CD8-positive, alpha-beta T cell (primary cell): ENCODE measurements at regions of chr1 and their contacts with region 1.

Region 1: DNA sequence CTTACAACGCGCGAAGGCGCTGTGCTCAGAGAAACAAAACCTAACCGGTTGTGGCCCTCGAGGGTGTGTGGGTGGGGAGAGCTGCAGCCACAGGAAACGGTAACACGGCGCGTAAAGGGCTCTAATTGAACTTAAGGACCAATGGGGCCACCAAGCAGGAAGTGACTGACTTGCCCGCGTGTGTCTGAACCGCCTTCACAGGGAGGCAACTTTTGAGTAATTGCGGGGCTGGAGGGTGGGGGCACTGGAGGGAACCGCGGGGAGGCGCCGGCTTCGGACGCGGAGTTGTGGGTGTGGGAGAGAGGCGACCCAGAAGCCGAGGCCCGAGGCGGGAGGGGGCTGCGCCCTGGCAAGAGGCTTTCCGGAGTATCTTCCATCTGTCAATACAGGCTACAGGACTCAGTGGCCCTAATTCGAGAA is 577 bp upstream of the PNRC2 start:
- DNase-seq: peak; percentile 76 to 98 (median 90)
- ATAC-seq: peak; percentile 79
- H3K4me3 ChIP-seq: peak overlapping the region; percentile 83 to 97
- H3K4me3 Mint-ChIP-seq: peak overlapping the region; percentile 100
- H3K27ac ChIP-seq: peak overlapping the region; percentile 95
- H3K27ac Mint-ChIP-seq: peak overlapping the region; percentile 100
- H3K4me1 ChIP-seq: peaks cover 32% of the 10 kb centered on the region
- H3K4me1 Mint-ChIP-seq: peaks cover 59% of the 10 kb centered on the region
- H3K27me3 ChIP-seq: no peaks in the 10 kb centered on the region
- H3K27me3 Mint-ChIP-seq: no peaks in the 10 kb centered on the region
- CTCF ChIP-seq: peak; percentile 34

Region 2: DNA sequence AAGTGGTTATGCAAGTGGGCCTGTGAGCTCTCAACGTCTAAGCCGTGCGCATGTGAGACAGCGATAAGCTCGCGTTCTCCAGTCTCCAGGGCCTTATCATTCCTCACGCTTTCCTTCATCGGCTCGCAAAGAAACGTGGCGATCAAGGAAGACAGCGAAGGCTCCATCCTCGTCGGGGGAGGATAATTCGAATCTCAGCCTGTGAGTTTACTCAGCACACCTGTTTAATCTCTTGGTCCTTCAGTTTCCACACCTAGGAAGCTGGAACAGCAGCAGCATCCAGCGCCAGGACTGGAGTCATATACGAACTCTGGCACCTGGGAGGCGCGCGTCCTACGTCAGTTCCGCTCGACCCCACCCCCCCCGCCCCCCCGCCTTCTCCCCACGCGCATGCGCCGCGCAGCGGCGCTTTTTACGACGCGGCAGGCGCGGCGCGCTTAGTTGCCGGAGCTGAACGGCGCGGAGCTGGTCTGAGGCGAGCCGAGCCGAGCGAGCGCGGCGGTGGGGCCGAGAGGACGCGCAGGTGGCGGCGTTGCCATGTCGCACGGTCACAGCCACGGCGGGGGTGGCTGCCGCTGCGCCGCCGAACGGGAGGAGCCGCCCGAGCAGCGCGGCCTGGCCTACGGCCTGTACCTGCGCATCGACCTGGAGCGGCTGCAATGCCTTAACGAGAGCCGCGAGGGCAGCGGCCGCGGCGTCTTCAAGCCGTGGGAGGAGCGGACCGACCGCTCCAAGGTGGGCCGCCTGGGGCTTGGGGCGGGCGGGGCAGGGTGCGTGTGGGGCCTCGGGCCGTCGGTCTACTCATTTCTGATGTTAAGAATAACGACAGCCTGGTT is 180.9 kb before region 1 on chr1 and contains the start of gene PITHD1:
- CTCF ChIA-PET with region 1: no interaction called
- POLR2A ChIA-PET with region 1: interaction called, 3 read pairs
- intact Hi-C with region 1: loop called in 1 of 2 experiments (anchors 5 kb)
- DNase-seq: peak; percentile 59 to 91 (median 78)
- ATAC-seq: peak; percentile 81
- H3K4me3 ChIP-seq: peak within 1 kb of the TSS; percentile 88 to 99
- H3K4me3 Mint-ChIP-seq: peak within 1 kb of the TSS; percentile 94
- H3K27ac ChIP-seq: peak within 1 kb of the TSS; percentile 87 to 95
- H3K27ac Mint-ChIP-seq: peak within 1 kb of the TSS; percentile 97
- H3K4me1 ChIP-seq: peaks cover 25% of the 10 kb centered on the region
- H3K4me1 Mint-ChIP-seq: peaks cover 54% of the 10 kb centered on the region
- H3K27me3 ChIP-seq: no peaks in the 10 kb centered on the region
- H3K27me3 Mint-ChIP-seq: no peaks in the 10 kb centered on the region
- CTCF ChIP-seq: no peak
- total RNA-seq, gene PITHD1: 112 to 117 TPM

Region 3: GRCh38 chr1:23838401-23838866 is 120.6 kb before region 1 on chr1:
- CTCF ChIA-PET with region 1: no interaction called
- POLR2A ChIA-PET with region 1: no interaction called
- intact Hi-C with region 1: loop called in 1 of 2 experiments (anchors 5 kb)
- DNase-seq: peak; percentile 55 to 91 (median 81)
- ATAC-seq: peak; percentile 100
- H3K4me3 ChIP-seq: peak overlapping the region; percentile 37 to 39
- H3K4me3 Mint-ChIP-seq: peak overlapping the region; percentile 79
- H3K27ac ChIP-seq: no peak overlapping the region
- H3K27ac Mint-ChIP-seq: peak overlapping the region; percentile 64
- H3K4me1 ChIP-seq: peaks cover 5% of the 10 kb centered on the region
- H3K4me1 Mint-ChIP-seq: peaks cover 11% of the 10 kb centered on the region
- H3K27me3 ChIP-seq: peaks cover 0 to 2% of the 10 kb centered on the region in 2 experiments
- H3K27me3 Mint-ChIP-seq: no peaks in the 10 kb centered on the region
- CTCF ChIP-seq: no peak

Region 4: GRCh38 chr1:23875382-23875781 is 83.7 kb before region 1 on chr1:
- CTCF ChIA-PET with region 1: no interaction called
- POLR2A ChIA-PET with region 1: no interaction called
- intact Hi-C with region 1: no loop called
- DNase-seq: no peak
- ATAC-seq: no peak
- H3K4me3 ChIP-seq: no peak overlapping the region
- H3K4me3 Mint-ChIP-seq: no peak overlapping the region
- H3K27ac ChIP-seq: no peak overlapping the region
- H3K27ac Mint-ChIP-seq: no peak overlapping the region
- H3K4me1 ChIP-seq: no peaks in the 10 kb centered on the region
- H3K4me1 Mint-ChIP-seq: no peaks in the 10 kb centered on the region
- H3K27me3 ChIP-seq: no peaks in the 10 kb centered on the region
- H3K27me3 Mint-ChIP-seq: no peaks in the 10 kb centered on the region
- CTCF ChIP-seq: no peak

Region 5: DNA sequence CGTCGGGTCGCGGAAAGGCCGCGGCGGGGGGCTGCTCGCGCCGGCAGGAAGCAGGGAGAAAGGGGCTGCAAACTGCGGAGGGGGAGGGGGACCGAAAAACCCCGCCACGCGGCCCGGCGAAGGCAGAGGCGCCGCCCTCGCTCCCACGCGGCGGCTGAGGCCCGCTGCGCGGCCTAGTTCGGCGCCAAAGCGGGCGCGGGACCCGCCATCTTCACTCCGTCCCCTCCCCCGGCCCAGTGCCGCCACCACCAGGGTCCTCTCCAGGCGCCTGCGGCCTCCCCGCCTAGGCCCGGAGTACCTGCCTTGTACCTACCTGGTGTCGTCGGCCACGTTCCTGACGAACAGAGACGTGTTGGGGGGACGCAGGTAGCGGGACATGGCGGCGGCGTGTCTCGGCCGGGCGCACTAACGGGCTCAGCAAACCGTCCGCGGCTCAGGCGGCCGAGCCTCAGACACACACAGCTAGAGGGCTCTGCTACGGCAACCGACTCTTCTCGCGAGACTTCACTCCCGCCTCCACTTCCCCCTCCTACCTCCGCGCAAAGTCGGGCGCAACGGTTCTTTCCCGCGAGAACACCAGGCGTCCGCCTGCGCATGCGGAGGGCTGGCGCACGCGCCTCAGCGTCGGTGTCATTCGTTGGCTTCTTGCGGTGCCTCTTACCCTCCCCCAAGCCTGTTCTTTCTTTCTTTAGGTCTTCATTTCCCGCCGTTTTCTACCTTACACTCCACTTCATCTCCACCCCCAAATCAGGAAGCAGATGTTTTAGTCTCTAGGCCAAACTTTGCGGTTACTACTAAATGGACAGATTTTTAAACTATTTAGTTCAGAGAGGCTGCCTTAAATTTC is 21.1 kb after region 1 on chr1 and contains the start of gene SRSF10:
- CTCF ChIA-PET with region 1: interaction called, 4 read pairs
- POLR2A ChIA-PET with region 1: interaction called, 24 read pairs
- intact Hi-C with region 1: loop called (anchors 1 kb)
- DNase-seq: peak; percentile 94 to 100 (median 97)
- ATAC-seq: peak; percentile 96
- H3K4me3 ChIP-seq: peak within 1 kb of the TSS; percentile 87 to 94
- H3K4me3 Mint-ChIP-seq: peak within 1 kb of the TSS; percentile 92
- H3K27ac ChIP-seq: peak within 1 kb of the TSS; percentile 92 to 98
- H3K27ac Mint-ChIP-seq: peak within 1 kb of the TSS; percentile 92
- H3K4me1 ChIP-seq: peaks cover 41% of the 10 kb centered on the region
- H3K4me1 Mint-ChIP-seq: peaks cover 52% of the 10 kb centered on the region
- H3K27me3 ChIP-seq: no peaks in the 10 kb centered on the region
- H3K27me3 Mint-ChIP-seq: no peaks in the 10 kb centered on the region
- CTCF ChIP-seq: peak; percentile 18
- total RNA-seq, gene SRSF10: 321 to 335 TPM

Region 6: GRCh38 chr1:23995431-23995837 is 36.4 kb after region 1 on chr1:
- CTCF ChIA-PET with region 1: no interaction called
- POLR2A ChIA-PET with region 1: no interaction called
- intact Hi-C with region 1: no loop called
- DNase-seq: no peak
- ATAC-seq: no peak
- H3K4me3 ChIP-seq: no peak overlapping the region
- H3K4me3 Mint-ChIP-seq: no peak overlapping the region
- H3K27ac ChIP-seq: no peak overlapping the region
- H3K27ac Mint-ChIP-seq: no peak overlapping the region
- H3K4me1 ChIP-seq: no peaks in the 10 kb centered on the region
- H3K4me1 Mint-ChIP-seq: peaks cover 2% of the 10 kb centered on the region
- H3K27me3 ChIP-seq: no peaks in the 10 kb centered on the region
- H3K27me3 Mint-ChIP-seq: peaks cover 2% of the 10 kb centered on the region
- CTCF ChIP-seq: no peak

Region 7: GRCh38 chr1:24070821-24071393 is 111.9 kb after region 1 on chr1:
- CTCF ChIA-PET with region 1: no interaction called
- POLR2A ChIA-PET with region 1: no interaction called
- intact Hi-C with region 1: loop called in 1 of 2 experiments (anchors 2 kb)
- DNase-seq: peak; percentile 38 to 80 (median 71)
- ATAC-seq: peak; percentile 94
- H3K4me3 ChIP-seq: no peak overlapping the region
- H3K4me3 Mint-ChIP-seq: no peak overlapping the region
- H3K27ac ChIP-seq: no peak overlapping the region
- H3K27ac Mint-ChIP-seq: no peak overlapping the region
- H3K4me1 ChIP-seq: no peaks in the 10 kb centered on the region
- H3K4me1 Mint-ChIP-seq: peaks cover 4% of the 10 kb centered on the region
- H3K27me3 ChIP-seq: no peaks in the 10 kb centered on the region
- H3K27me3 Mint-ChIP-seq: peaks cover 3% of the 10 kb centered on the region
- CTCF ChIP-seq: peak; percentile 86

Region 8: DNA sequence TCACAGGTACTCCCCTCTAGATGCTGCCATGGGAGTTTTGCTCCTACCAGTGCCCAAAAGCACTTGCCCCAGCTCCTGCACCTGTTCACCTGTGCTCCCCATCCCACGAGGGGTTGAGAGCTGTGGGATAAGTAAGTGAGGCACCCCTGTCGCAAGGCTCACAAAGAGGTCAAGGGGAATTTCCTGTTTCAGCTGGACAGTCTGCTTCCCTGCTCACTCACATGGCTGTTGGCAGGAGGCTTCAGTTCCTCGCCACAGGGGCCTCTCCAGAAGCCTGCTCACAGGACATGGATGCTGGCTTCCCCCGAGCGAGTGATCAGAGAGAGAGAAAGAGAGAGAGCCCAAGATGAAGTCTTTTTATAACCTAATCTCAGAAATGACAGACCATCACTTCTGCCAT is 588.1 kb after region 1 on chr1:
- CTCF ChIA-PET with region 1: no interaction called
- POLR2A ChIA-PET with region 1: no interaction called
- intact Hi-C with region 1: no loop called
- DNase-seq: no peak
- ATAC-seq: no peak
- H3K4me3 ChIP-seq: no peak overlapping the region
- H3K4me3 Mint-ChIP-seq: no peak overlapping the region
- H3K27ac ChIP-seq: no peak overlapping the region
- H3K27ac Mint-ChIP-seq: no peak overlapping the region
- H3K4me1 ChIP-seq: peaks cover 14% of the 10 kb centered on the region
- H3K4me1 Mint-ChIP-seq: peaks cover 24% of the 10 kb centered on the region
- H3K27me3 ChIP-seq: no peaks in the 10 kb centered on the region
- H3K27me3 Mint-ChIP-seq: no peaks in the 10 kb centered on the region
- CTCF ChIP-seq: no peak

Region 9: DNA sequence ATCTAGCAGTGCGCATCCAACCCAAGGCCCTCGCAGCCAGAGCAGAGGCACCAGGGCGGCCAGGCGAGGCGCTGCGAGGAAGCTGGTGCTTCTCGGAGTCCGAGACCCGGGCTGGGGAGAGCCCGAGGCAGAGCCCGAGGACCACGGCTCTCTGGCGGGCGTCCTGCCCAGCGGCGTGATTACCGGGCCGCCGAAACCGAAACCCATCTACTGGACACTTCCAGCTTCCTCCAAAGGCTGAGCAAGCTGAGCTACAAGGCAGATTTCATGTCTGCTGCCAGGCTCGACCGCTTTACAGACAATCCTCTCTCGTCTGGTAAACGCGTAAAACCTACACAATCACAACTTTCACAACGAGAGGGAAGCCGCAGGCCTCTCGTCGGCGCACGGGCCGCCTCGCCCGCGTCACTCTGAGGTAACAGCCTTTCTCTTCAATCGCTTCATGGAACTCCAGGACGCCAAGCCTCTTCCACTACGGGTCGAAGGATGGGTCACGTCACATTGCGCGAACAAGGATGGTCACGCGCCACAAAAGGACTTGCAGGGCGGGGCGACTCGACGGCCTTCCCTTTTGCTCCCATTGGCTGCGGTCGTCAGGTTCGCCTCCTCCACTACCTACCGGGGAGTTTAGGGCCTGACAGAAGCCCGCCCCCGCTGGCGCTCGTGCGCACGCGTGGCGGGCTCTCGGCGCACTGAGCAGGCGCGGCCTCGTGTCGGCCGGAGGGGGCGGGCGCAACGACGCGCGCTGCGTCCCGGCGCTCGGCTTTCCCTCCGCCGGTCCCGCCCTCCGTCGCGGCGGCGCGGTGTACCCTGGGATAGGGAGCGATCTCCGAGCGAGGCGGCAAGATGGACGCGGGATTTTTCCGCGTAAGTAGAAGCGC is 683.7 kb after region 1 on chr1 and contains the start of gene SRRM1:
- CTCF ChIA-PET with region 1: no interaction called
- POLR2A ChIA-PET with region 1: no interaction called
- intact Hi-C with region 1: loop called (anchors 2 kb)
- DNase-seq: peak; percentile 96 to 100 (median 98)
- ATAC-seq: peak; percentile 86
- H3K4me3 ChIP-seq: peak within 1 kb of the TSS; percentile 89 to 98
- H3K4me3 Mint-ChIP-seq: peak within 1 kb of the TSS; percentile 88
- H3K27ac ChIP-seq: peak within 1 kb of the TSS; percentile 98 to 100
- H3K27ac Mint-ChIP-seq: peak within 1 kb of the TSS; percentile 99
- H3K4me1 ChIP-seq: peaks cover 32% of the 10 kb centered on the region
- H3K4me1 Mint-ChIP-seq: peaks cover 41% of the 10 kb centered on the region
- H3K27me3 ChIP-seq: no peaks in the 10 kb centered on the region
- H3K27me3 Mint-ChIP-seq: no peaks in the 10 kb centered on the region
- CTCF ChIP-seq: no peak
- total RNA-seq, gene SRRM1: 460 to 474 TPM